GM23248 (cell line): ENCODE measurements at regions of chr19 and their contacts with region 1.

Region 1: DNA sequence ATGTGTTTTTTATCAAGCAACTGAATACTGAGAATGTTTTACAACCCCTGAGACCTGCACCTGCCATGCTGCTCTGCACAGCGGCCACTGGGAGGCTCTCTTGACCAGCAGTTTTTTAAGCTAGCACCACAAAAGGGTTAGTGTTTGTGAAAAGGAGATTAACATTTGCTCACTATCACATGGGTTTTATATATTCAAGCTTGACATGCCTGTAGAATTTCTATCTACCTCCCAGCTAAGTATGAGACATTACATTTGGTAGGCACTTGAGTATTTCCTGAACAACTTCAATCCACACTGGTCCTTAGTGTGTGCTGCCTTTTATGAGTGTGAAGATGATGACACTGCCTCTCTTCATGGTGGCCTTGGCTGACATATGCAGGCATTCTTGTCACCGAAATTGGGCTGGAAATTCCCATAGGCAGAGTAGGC is 1238.9 kb downstream of the UQCRFS1 start:
- DNase-seq: peak; percentile 69
- H3K4me3 ChIP-seq: no peak overlapping the region
- H3K27ac ChIP-seq: no peak overlapping the region
- H3K4me1 ChIP-seq: no peaks in the 10 kb centered on the region
- H3K27me3 ChIP-seq: peaks cover 4% of the 10 kb centered on the region; the same call in 1 of the 2 replicates

Region 2: GRCh38 chr19:28126135-28126898 is 152.2 kb after region 1 on chr19:
- in situ Hi-C with region 1: no loop called
- DNase-seq: no peak
- H3K4me3 ChIP-seq: no peak overlapping the region
- H3K27ac ChIP-seq: no peak overlapping the region
- H3K4me1 ChIP-seq: no peaks in the 10 kb centered on the region
- H3K27me3 ChIP-seq: no peaks in the 10 kb centered on the region

Region 3: DNA sequence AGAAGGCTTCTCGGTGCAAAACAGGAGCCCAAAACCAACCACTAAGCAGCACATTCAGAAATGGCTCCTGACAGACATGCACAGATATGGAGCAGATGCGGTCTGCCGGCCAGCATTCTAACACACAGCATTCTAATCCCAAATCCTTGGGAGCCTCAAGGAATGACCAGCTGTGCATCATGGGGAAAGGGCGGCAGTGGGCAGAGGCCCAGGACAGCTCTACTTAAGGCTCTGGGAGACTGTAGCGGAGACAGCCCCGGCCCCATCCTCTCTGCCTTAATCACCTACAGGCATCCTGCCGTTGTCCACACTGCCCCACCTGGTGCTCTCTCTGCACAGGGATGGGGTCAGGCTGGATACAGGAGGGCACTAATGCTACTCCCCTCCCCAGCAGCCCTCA is 222.9 kb after region 1 on chr19:
- in situ Hi-C with region 1: no loop called
- DNase-seq: no peak
- H3K4me3 ChIP-seq: no peak overlapping the region
- H3K27ac ChIP-seq: no peak overlapping the region
- H3K4me1 ChIP-seq: no peaks in the 10 kb centered on the region
- H3K27me3 ChIP-seq: no peaks in the 10 kb centered on the region

Region 4: DNA sequence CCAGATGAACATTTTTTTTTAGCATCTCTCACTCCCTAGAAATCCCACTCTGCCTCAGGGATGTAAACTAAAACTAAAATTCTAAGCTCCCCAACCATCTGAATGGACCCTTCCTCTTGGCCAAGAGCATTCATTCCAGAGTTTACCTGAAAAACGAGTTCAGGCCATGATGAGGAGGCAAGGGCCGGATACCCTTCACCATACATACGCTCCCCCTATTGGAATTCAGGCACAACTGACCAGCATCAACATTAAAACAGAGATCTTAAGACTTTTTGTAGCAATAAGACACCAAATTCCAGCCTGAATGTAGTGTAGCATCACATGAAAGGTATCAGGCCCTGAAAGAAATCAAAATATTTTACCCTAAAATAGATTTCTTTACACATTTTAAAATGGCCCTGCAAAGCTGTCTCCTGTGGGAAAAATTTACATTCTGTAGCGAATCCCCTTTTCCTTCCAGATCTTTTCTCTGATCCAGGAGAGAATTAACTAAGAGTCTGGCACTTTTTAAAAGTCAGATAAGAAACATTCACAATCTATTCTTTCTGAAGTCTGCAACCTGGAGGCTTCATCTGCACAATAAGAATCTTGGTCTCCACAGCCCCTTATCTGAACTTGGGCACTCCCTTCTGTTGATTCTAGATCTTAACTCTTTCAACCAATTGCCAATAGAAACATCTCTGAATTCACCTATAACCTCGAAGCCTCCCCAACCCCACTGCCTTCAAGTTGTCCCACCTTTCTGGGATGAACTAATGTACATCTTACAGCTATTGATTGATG is 350.4 kb after region 1 on chr19:
- in situ Hi-C with region 1: loop called (anchors 10 kb)
- DNase-seq: no peak
- H3K4me3 ChIP-seq: no peak overlapping the region
- H3K27ac ChIP-seq: no peak overlapping the region
- H3K4me1 ChIP-seq: no peaks in the 10 kb centered on the region
- H3K27me3 ChIP-seq: peaks cover 22% of the 10 kb centered on the region; the same call in 1 of the 2 replicates

Region 5: DNA sequence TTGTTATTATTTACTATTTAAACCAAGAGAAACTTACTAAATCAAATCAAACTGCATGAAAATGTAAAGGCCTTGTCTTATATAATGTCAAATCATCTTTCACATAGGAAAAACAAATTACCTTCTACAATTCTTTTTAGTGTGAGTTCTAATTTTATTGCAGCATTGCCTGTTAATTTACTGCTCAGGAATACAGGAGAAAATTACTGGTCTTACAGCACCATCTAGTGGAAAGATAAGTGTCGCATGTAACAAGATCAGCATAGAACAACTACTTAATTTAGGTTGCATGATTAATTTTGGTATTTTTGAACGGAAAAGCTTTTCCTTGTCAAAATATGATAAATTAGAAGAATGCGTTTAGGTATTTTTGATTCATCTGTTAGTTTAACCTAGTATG is 736.2 kb after region 1 on chr19:
- in situ Hi-C with region 1: loop called (anchors 25 kb)
- DNase-seq: peak; percentile 71
- H3K4me3 ChIP-seq: no peak overlapping the region
- H3K27ac ChIP-seq: no peak overlapping the region
- H3K4me1 ChIP-seq: peaks cover 7% of the 10 kb centered on the region
- H3K27me3 ChIP-seq: peaks cover 12% of the 10 kb centered on the region